Right ventricle myocardium superior (tissue), 1 donor: ENCODE measurements at regions of chr2 and their contacts with region 1.

Region 1: GRCh38 chr2:53970724-53971602 is at the start of gene PSME4:
- DNase-seq: peak; percentile 97
- ATAC-seq: peak; percentile 95
- total RNA-seq, gene PSME4: 52.3 TPM

Region 2: DNA sequence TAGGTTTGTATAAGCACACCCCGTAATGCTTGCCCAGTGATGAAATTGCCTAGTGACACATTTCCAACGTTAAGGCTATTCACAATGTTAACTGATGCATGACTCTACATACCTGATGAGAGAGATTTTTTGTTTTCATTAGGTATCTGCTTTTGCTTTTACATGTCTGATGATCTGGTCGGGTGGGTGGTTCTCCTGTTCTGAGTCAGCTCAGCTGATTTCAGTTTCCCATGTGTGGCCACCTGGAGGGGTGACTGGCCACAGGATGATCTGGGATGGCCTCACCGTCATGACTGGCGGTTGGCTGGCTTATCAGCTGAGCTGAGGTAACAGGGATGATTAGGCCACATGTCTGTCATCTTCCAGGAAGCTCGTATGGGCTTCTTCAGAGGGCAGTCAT is 110.6 kb after region 1 on chr2:
- intact Hi-C with region 1: loop called (anchors 10 kb)
- DNase-seq: no peak
- ATAC-seq: no peak